Activated CD4-positive, alpha-beta memory T cell treated with anti-CD3 and anti-CD28 coated beads for 36 hours (primary cell): ENCODE measurements at regions of chr4 and their contacts with region 1.

Region 1: GRCh38 chr4:142405021-142405694 is 440.9 kb downstream of the INPP4B start:
- DNase-seq: peak; percentile 77
- H3K4me3 Mint-ChIP-seq: peak overlapping the region; percentile 92
- H3K27ac Mint-ChIP-seq: peak overlapping the region; percentile 97
- H3K4me1 Mint-ChIP-seq: peaks cover 40% of the 10 kb centered on the region
- H3K27me3 Mint-ChIP-seq: no peaks in the 10 kb centered on the region

Region 2: DNA sequence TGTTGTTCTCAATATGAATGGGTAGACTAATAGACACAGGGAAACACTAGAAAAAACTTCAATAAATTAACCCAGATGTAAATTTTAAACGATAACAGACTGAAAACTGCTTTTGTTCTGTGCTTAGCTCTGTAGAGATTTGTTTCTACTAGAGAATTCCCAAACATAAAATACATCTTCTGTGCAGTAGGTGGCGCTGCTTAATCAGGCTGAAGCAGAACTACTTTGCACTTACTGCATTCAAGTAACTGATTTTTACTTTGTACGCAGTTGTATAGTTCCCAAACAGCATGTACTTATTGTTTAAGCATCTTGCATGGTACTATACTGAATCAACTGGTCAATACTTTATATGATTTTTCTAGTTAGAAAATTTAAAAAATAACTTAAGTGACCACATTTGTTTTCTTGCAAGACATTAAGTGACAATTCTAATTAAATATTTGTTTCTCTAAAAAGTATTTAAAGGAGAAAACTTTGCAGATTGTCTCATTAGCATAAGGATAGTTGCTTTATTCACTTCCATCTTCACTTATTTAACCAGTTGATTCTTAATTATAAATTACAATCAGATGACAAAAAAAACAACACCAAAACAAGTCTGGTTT is 278.2 kb before region 1 on chr4:
- CTCF ChIA-PET with region 1: no interaction called
- POLR2A ChIA-PET with region 1: no interaction called
- intact Hi-C with region 1: loop called (anchors 5 kb)
- DNase-seq: peak; percentile 68
- H3K4me3 Mint-ChIP-seq: no peak overlapping the region
- H3K27ac Mint-ChIP-seq: no peak overlapping the region
- H3K4me1 Mint-ChIP-seq: peaks cover 26% of the 10 kb centered on the region
- H3K27me3 Mint-ChIP-seq: no peaks in the 10 kb centered on the region

Region 3: GRCh38 chr4:142372530-142373260 is 32.5 kb before region 1 on chr4:
- CTCF ChIA-PET with region 1: interaction called, 9 read pairs
- POLR2A ChIA-PET with region 1: interaction called, 97 read pairs
- intact Hi-C with region 1: loop called (anchors 1 kb)
- DNase-seq: no peak
- H3K4me3 Mint-ChIP-seq: peak overlapping the region; percentile 61
- H3K27ac Mint-ChIP-seq: peak overlapping the region; percentile 89
- H3K4me1 Mint-ChIP-seq: peaks cover 71% of the 10 kb centered on the region
- H3K27me3 Mint-ChIP-seq: no peaks in the 10 kb centered on the region

Region 4: DNA sequence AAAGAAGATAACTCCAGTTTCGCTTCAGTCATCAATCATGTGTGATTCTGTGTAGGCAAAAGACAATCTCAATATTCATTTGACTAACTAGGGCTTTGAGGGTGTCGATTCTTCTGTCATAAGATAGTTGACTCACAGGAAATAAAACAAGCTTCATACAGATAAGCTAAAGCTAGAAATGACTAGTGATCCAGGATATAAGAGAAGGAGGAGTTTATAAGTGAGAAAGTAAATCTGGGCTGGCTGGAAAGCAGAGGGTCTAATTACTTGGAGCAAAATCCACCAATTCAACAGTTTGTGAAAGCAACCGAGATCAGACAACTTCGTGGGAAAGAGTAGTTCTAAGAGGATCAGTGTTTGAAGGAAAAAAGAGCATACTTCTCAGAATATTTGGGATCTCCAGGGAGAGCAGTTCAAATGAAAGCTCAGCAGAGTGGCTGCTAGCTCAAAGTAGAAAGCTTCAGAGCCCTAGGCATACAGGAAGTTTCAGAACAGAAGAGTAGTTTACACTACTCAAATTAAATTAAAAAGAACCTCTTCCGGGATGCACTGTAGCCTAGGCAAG is 11.6 kb after region 1 on chr4:
- CTCF ChIA-PET with region 1: interaction called, 32 read pairs
- POLR2A ChIA-PET with region 1: interaction called, 114 read pairs
- intact Hi-C with region 1: loop called (anchors 1 kb)
- DNase-seq: no peak
- H3K4me3 Mint-ChIP-seq: peak overlapping the region; percentile 72
- H3K27ac Mint-ChIP-seq: peak overlapping the region; percentile 92
- H3K4me1 Mint-ChIP-seq: peaks cover 67% of the 10 kb centered on the region
- H3K27me3 Mint-ChIP-seq: no peaks in the 10 kb centered on the region

Region 5: GRCh38 chr4:142713282-142714030 is 308.3 kb after region 1 on chr4:
- CTCF ChIA-PET with region 1: no interaction called
- POLR2A ChIA-PET with region 1: interaction called, 3 read pairs
- intact Hi-C with region 1: loop called (anchors 1 kb)
- DNase-seq: no peak
- H3K4me3 Mint-ChIP-seq: peak overlapping the region; percentile 17
- H3K27ac Mint-ChIP-seq: peak overlapping the region; percentile 87
- H3K4me1 Mint-ChIP-seq: peaks cover 61% of the 10 kb centered on the region
- H3K27me3 Mint-ChIP-seq: no peaks in the 10 kb centered on the region

Region 6: GRCh38 chr4:143513306-143514168 is 1108.4 kb after region 1 on chr4 and contains the start of gene SMARCA5:
- CTCF ChIA-PET with region 1: no interaction called
- POLR2A ChIA-PET with region 1: no interaction called
- intact Hi-C with region 1: loop called (anchors 5 kb)
- DNase-seq: peak; percentile 97
- H3K4me3 Mint-ChIP-seq: peak within 1 kb of the TSS; percentile 97
- H3K27ac Mint-ChIP-seq: peak within 1 kb of the TSS; percentile 97
- H3K4me1 Mint-ChIP-seq: peaks cover 25% of the 10 kb centered on the region
- H3K27me3 Mint-ChIP-seq: no peaks in the 10 kb centered on the region
- total RNA-seq, gene SMARCA5: 67.0 to 69.3 TPM